MCF 10A (cell line): ENCODE measurements at regions of chr3 and their contacts with region 1.

Region 1: GRCh38 chr3:136250226-136250902 is at the start of gene PCCB:
- DNase-seq: peak; percentile 94
- H3K4me3 Mint-ChIP-seq: peak within 1 kb of the TSS; percentile 81
- H3K27ac Mint-ChIP-seq: peak within 1 kb of the TSS; percentile 67
- H3K4me1 Mint-ChIP-seq: peaks cover 17% of the 10 kb centered on the region
- H3K27me3 Mint-ChIP-seq: no peaks in the 10 kb centered on the region
- CTCF ChIP-seq: peak; percentile 65
- total RNA-seq, gene PCCB: 51.7 and 54.0 TPM in 2 replicates

Region 2: GRCh38 chr3:135641761-135642160 is 608.6 kb before region 1 on chr3:
- CTCF ChIA-PET with region 1: no interaction called
- POLR2A ChIA-PET with region 1: no interaction called
- intact Hi-C with region 1: no loop called
- DNase-seq: no peak
- H3K4me3 Mint-ChIP-seq: no peak overlapping the region
- H3K27ac Mint-ChIP-seq: no peak overlapping the region
- H3K4me1 Mint-ChIP-seq: no peaks in the 10 kb centered on the region
- H3K27me3 Mint-ChIP-seq: no peaks in the 10 kb centered on the region
- CTCF ChIP-seq: no peak

Region 3: GRCh38 chr3:135699741-135700140 is 550.6 kb before region 1 on chr3:
- CTCF ChIA-PET with region 1: no interaction called
- POLR2A ChIA-PET with region 1: no interaction called
- intact Hi-C with region 1: no loop called
- DNase-seq: no peak
- H3K4me3 Mint-ChIP-seq: no peak overlapping the region
- H3K27ac Mint-ChIP-seq: no peak overlapping the region
- H3K4me1 Mint-ChIP-seq: no peaks in the 10 kb centered on the region
- H3K27me3 Mint-ChIP-seq: no peaks in the 10 kb centered on the region
- CTCF ChIP-seq: no peak

Region 4: GRCh38 chr3:136022529-136023263 is 227.7 kb before region 1 on chr3:
- CTCF ChIA-PET with region 1: no interaction called
- POLR2A ChIA-PET with region 1: no interaction called
- intact Hi-C with region 1: no loop called
- DNase-seq: peak; percentile 36
- H3K4me3 Mint-ChIP-seq: no peak overlapping the region
- H3K27ac Mint-ChIP-seq: peak overlapping the region; percentile 59
- H3K4me1 Mint-ChIP-seq: peaks cover 6% of the 10 kb centered on the region
- H3K27me3 Mint-ChIP-seq: no peaks in the 10 kb centered on the region
- CTCF ChIP-seq: no peak

Region 5: DNA sequence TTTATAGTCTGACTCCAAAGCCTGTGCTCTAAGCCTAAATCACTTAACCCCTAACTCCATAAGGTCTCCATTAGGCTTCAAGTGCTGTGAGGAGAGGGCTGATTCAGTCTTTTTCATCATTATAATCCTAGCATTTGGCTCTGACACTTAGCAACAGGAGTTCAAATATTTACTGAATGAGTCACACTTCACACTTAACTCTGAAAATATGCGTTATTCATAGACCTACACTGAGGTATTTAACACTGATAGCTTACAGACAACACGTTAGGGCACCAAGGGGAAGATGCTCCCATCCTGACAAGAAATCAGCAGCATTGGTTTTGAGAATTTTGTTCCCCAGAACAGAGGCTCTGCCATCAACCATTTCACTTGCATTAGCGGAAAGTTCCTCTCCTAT is 107.8 kb before region 1 on chr3:
- CTCF ChIA-PET with region 1: interaction called, 3 read pairs
- POLR2A ChIA-PET with region 1: interaction called, 3 read pairs
- intact Hi-C with region 1: loop called (anchors 5 kb)
- DNase-seq: peak; percentile 76
- H3K4me3 Mint-ChIP-seq: no peak overlapping the region
- H3K27ac Mint-ChIP-seq: peak overlapping the region; percentile 87
- H3K4me1 Mint-ChIP-seq: peaks cover 24% of the 10 kb centered on the region
- H3K27me3 Mint-ChIP-seq: no peaks in the 10 kb centered on the region
- CTCF ChIP-seq: no peak

Region 6: DNA sequence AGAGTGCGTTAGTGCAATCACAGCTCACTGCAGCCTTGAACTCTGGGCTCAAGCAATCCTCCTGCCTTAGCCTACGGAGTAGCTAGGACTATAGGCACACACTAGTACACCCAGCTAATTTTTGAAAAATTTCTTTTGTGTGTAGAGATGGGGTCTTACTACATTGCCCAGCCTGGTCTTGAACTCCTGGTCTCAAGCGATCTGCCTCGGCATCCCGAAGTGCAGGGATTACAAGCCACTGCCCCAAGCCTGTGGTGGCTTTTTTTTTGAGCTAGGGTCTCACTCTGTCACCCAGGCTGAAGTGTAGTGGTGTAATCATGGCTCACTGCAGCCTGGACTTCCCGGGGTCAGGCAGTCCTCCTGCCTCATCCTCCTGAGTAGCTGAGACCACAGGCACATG is 16.9 kb after region 1 on chr3:
- CTCF ChIA-PET with region 1: interaction called, 11 read pairs
- POLR2A ChIA-PET with region 1: no interaction called
- intact Hi-C with region 1: no loop called
- DNase-seq: no peak
- H3K4me3 Mint-ChIP-seq: no peak overlapping the region
- H3K27ac Mint-ChIP-seq: no peak overlapping the region
- H3K4me1 Mint-ChIP-seq: peaks cover 6% of the 10 kb centered on the region
- H3K27me3 Mint-ChIP-seq: no peaks in the 10 kb centered on the region
- CTCF ChIP-seq: no peak